ENCODE measurements at regions of chr2 and their contacts with region 1.

Region 1: DNA sequence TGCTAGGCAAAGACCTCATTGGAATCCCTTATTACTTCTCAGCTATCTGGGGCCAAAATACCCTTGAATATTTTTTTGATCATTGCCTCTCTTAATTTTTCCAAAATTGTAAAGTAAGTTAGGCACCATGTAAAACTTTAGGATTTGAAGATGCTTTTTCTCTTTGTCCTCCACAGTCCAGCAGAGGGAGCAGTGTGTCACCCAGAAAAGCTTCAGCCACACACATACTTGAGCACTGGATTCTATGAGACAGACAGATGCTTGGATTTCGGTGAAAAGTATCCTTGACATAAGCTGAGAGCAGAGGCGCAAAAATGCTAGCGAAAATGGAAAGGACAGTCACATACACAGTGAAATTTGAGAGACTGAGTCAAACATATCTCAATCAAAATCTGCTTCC is 74.7 kb upstream of the KCNJ3 start:
- DNase-seq: peak; percentile 32
- H3K4me3 ChIP-seq: peak overlapping the region in 1 of 2 experiments; percentile 40; a peak in 1 of 4 replicates
- H3K27ac ChIP-seq: no peak overlapping the region
- H3K4me1 ChIP-seq: no peaks in the 10 kb centered on the region
- H3K27me3 ChIP-seq: no peaks in the 10 kb centered on the region
- CTCF ChIP-seq: peak; percentile 83
- EP300 ChIP-seq: no peak
- RAD21 ChIP-seq: peak; percentile 79

Region 2: DNA sequence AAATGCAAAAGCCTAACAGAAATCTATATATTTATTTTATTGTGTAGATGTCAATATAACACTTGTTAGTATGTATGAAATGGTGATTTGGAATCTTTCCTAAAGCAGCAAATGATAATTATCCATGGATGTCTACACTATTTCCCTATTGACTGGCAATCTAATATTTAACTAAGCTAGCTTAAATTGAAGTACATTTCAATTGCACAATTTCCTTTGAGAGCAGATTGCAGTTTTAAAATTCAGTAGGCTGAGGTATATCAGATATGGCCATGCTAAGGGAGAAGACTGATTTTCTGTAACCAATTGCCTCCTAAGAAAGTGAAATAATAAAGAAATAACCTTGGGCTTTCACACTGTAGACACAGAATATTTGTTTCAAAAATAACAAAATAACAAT is 15.4 kb before region 1 on chr2:
- CTCF ChIA-PET with region 1: interaction called, 10 read pairs
- POLR2A ChIA-PET with region 1: no interaction called
- DNase-seq: no peak
- H3K4me3 ChIP-seq: no peak overlapping the region
- H3K27ac ChIP-seq: no peak overlapping the region
- H3K4me1 ChIP-seq: no peaks in the 10 kb centered on the region
- H3K27me3 ChIP-seq: no peaks in the 10 kb centered on the region
- CTCF ChIP-seq: no peak
- EP300 ChIP-seq: no peak
- RAD21 ChIP-seq: no peak

Region 3: DNA sequence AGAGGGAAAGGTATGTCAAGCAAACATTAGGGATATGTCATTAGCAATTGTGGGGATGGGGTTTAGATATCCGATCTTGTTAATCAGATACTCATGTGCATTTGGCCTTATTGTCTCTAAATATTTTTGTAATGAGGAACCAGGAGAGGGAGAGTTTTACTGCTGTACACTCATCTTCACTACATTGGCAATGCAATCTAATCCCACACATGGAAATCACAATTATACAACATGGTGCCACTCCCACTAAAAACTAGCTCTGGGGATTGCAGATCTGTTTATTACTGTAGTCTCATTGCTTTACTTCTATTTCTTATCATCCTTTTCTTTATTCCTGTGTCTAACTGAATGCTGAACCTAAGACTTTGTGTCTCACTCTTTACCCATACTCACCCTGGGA is 35.0 kb after region 1 on chr2:
- CTCF ChIA-PET with region 1: interaction called, 10 read pairs
- POLR2A ChIA-PET with region 1: no interaction called
- DNase-seq: no peak
- H3K4me3 ChIP-seq: no peak overlapping the region
- H3K27ac ChIP-seq: no peak overlapping the region
- H3K4me1 ChIP-seq: no peaks in the 10 kb centered on the region
- H3K27me3 ChIP-seq: no peaks in the 10 kb centered on the region
- CTCF ChIP-seq: no peak
- EP300 ChIP-seq: no peak
- RAD21 ChIP-seq: no peak

Region 4: GRCh38 chr2:155223781-155224406 is 600.1 kb after region 1 on chr2:
- CTCF ChIA-PET with region 1: interaction called, 13 read pairs
- POLR2A ChIA-PET with region 1: no interaction called
- DNase-seq: peak; percentile 9
- H3K4me3 ChIP-seq: peak overlapping the region in 1 of 2 experiments; percentile 3; a peak in 1 of 4 replicates
- H3K27ac ChIP-seq: no peak overlapping the region
- H3K4me1 ChIP-seq: no peaks in the 10 kb centered on the region; a peak in 1 of 4 replicates
- H3K27me3 ChIP-seq: no peaks in the 10 kb centered on the region
- CTCF ChIP-seq: peak; percentile 71
- EP300 ChIP-seq: no peak
- RAD21 ChIP-seq: peak; percentile 71